Left lung (tissue), 14 donors: ENCODE measurements at regions of chr3 and their contacts with region 1.

Region 1: DNA sequence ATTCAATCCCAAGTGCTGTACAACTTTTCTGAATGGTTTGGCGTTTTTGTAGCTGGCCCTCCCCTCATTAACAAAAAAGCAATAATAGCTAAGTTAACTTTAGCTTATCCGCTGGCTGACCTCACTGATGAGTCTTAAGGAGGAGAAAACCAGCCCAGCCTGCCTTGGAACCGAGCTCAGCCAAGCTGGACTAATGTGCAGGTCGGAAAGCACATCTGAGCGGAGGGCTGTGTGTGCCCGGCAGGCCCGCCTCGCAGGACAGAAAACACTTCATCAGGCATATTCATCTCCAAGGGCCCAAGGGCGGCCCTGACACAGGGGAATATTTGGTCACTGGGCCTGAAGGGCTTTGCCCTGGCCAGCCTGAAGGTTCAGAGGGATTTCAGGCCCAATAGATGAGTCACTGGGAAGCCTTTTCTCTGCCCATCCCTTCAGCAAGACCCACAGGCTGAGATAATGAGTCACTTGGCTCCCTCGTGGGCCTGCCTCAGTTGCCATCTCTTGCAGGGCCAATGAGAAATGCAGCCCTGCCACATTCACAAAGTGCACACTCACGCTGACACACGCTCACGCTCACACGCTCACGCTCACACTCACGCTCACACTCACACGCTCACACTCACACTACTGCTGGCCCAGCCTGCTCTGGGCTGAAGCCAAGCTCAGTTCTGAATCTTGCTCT is 75.1 kb downstream of the SLC12A8 start:
- DNase-seq: no peak
- ATAC-seq: peak; percentile 6
- H3K4me3 ChIP-seq: no peak overlapping the region
- H3K27ac ChIP-seq: peak overlapping the region in 1 of 2 donors; percentile 27
- H3K4me1 ChIP-seq: peaks cover 12 to 29% of the 10 kb centered on the region in 2 donors
- H3K27me3 ChIP-seq: no peaks in the 10 kb centered on the region
- CTCF ChIP-seq: no peak

Region 2: GRCh38 chr3:125052624-125053184 is 84.8 kb before region 1 on chr3:
- intact Hi-C with region 1: no loop called
- DNase-seq: no peak
- ATAC-seq: no peak
- H3K4me3 ChIP-seq: peak overlapping the region in 1 of 2 donors; percentile 71
- H3K27ac ChIP-seq: peak overlapping the region; percentile 80 to 87
- H3K4me1 ChIP-seq: peaks cover 39 to 75% of the 10 kb centered on the region in 2 donors
- H3K27me3 ChIP-seq: peaks cover 0 to 32% of the 10 kb centered on the region in 2 donors
- CTCF ChIP-seq: no peak

Region 3: GRCh38 chr3:125062888-125063618 is 74.4 kb before region 1 on chr3:
- intact Hi-C with region 1: loop called in 1 of 2 experiments (anchors 10 kb)
- DNase-seq: peak in 1 of 4 donors; percentile 53
- ATAC-seq: peak; percentile 78
- H3K4me3 ChIP-seq: no peak overlapping the region
- H3K27ac ChIP-seq: peak overlapping the region in 1 of 2 donors; percentile 60
- H3K4me1 ChIP-seq: peaks cover 17 to 33% of the 10 kb centered on the region in 2 donors
- H3K27me3 ChIP-seq: no peaks in the 10 kb centered on the region
- CTCF ChIP-seq: no peak

Region 4: GRCh38 chr3:125670945-125671344 is 533.5 kb after region 1 on chr3:
- intact Hi-C with region 1: no loop called
- DNase-seq: no peak
- ATAC-seq: no peak
- H3K4me3 ChIP-seq: no peak overlapping the region
- H3K27ac ChIP-seq: no peak overlapping the region
- H3K4me1 ChIP-seq: no peaks in the 10 kb centered on the region
- H3K27me3 ChIP-seq: no peaks in the 10 kb centered on the region
- CTCF ChIP-seq: no peak